ENCODE measurements at regions of chr12 and their contacts with region 1.

Region 1: GRCh38 chr12:47837190-47838171 is 17.8 kb upstream of the HDAC7 start:
- DNase-seq: peak; percentile 71 to 86 (median 72)
- ATAC-seq: peak; percentile 39
- H3K4me3 ChIP-seq: no peak overlapping the region
- H3K27ac ChIP-seq: no peak overlapping the region
- H3K4me1 ChIP-seq: peaks cover 34 to 56% of the 10 kb centered on the region in 2 experiments
- H3K27me3 ChIP-seq: no peaks in the 10 kb centered on the region; a peak in 1 of 5 replicates
- CTCF ChIP-seq: peak; percentile 86 to 95 (median 92)
- EP300 ChIP-seq: no peak
- POLR2A ChIP-seq: no peak
- RAD21 ChIP-seq: peak; percentile 89 to 96

Region 2: GRCh38 chr12:47651368-47652254 is 185.9 kb before region 1 on chr12:
- CTCF ChIA-PET with region 1: no interaction called
- POLR2A ChIA-PET with region 1: no interaction called
- in situ Hi-C with region 1: no loop called
- intact Hi-C with region 1: loop called (anchors 5 kb)
- DNase-seq: peak in 2 of 4 experiments; percentile 23 to 52
- ATAC-seq: peak; percentile 80
- H3K4me3 ChIP-seq: no peak overlapping the region
- H3K27ac ChIP-seq: no peak overlapping the region
- H3K4me1 ChIP-seq: peaks cover 0 to 9% of the 10 kb centered on the region in 2 experiments; a peak in 1 of 5 replicates
- H3K27me3 ChIP-seq: no peaks in the 10 kb centered on the region
- CTCF ChIP-seq: peak; percentile 57 to 65 (median 59); a peak in 5 of 6 replicates
- EP300 ChIP-seq: no peak
- POLR2A ChIP-seq: no peak
- RAD21 ChIP-seq: peak; percentile 21 to 58; a peak in 3 of 4 replicates

Region 3: DNA sequence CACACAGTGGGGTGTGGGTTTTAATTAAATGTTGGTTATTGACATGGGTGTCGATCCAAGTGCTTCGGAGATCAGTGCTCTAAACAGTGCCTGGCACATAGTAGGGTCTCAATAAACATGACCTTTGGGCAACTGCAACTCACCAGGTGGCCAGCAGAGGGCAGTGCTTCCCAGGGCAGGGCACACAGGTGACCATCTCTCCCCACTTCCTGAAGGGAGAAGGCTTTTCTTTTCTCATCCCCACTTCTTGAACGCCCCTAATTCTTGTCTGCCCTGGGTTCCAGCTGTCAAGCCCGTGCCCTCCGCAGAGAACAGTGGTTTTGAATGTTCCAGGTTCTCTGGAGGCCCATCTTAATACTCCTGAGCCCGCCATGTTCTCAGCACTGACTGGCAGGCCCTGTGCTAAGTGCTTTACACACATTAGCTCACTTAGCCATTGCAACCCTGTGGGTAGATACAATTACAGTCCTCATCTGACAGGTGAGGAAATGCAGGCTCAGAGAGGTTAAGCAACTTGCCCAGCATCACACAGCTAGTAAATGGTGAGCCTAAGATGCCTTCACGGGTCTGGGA is 95.1 kb before region 1 on chr12:
- CTCF ChIA-PET with region 1: interaction called, 59 read pairs
- POLR2A ChIA-PET with region 1: interaction called, 5 read pairs
- in situ Hi-C with region 1: no loop called
- intact Hi-C with region 1: loop called (anchors 1 kb)
- DNase-seq: peak; percentile 71 to 76 (median 74)
- ATAC-seq: peak; percentile 57
- H3K4me3 ChIP-seq: no peak overlapping the region
- H3K27ac ChIP-seq: no peak overlapping the region
- H3K4me1 ChIP-seq: peaks cover 27 to 54% of the 10 kb centered on the region in 2 experiments
- H3K27me3 ChIP-seq: peaks cover 7 to 41% of the 10 kb centered on the region in 2 experiments
- CTCF ChIP-seq: peak; percentile 93 to 98 (median 97)
- EP300 ChIP-seq: no peak
- POLR2A ChIP-seq: no peak
- RAD21 ChIP-seq: peak; percentile 91 to 97

Region 4: GRCh38 chr12:47785036-47785886 is 52.2 kb before region 1 on chr12:
- CTCF ChIA-PET with region 1: no interaction called
- POLR2A ChIA-PET with region 1: interaction called, 5 read pairs
- in situ Hi-C with region 1: loop called (anchors 5 kb)
- intact Hi-C with region 1: no loop called
- DNase-seq: peak; percentile 45 to 75 (median 64)
- ATAC-seq: peak; percentile 20; the same call in 2 of the 3 replicates
- H3K4me3 ChIP-seq: no peak overlapping the region
- H3K27ac ChIP-seq: no peak overlapping the region; the same call in 2 of the 3 replicates
- H3K4me1 ChIP-seq: peaks cover 0 to 35% of the 10 kb centered on the region in 2 experiments; a peak in 4 of 5 replicates
- H3K27me3 ChIP-seq: no peaks in the 10 kb centered on the region
- CTCF ChIP-seq: no peak
- EP300 ChIP-seq: no peak
- POLR2A ChIP-seq: no peak
- RAD21 ChIP-seq: no peak

Region 5: DNA sequence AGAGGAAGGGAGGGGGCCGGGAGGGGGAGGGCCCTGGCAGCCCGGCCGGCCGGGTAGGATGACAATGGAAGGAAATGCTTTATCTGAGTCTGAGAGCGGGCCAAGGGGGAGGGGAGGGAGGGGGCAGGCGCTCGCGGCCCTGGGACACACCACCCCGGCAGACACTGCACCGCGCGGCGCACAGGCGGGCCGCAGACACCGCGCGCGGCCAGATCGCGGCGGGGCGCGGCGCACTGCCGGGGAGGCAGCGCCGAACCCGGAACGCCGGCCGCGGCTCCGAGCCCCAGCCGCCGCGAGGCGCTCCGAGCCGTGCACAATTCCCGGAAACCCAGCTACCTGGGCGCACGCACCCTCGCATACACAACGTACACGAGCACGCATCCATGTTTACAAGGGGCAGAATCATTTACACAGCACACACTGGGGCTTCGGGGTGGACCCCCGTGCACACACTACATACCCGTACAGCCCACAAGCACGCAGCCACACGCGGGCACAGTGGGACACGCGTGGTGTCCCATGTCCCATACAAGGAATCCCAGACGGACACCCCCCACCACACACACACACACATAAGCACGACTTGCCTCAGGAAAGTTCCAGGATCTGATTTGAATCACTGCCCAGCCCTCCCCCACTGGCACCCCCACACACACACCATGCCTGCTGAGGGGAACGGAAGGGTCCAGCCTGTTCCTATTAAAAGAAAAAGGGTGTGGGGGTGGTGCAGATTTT is 17.4 kb before region 1 on chr12 and contains the start of gene HDAC7:
- CTCF ChIA-PET with region 1: interaction called, 17 read pairs
- POLR2A ChIA-PET with region 1: interaction called, 6 read pairs
- in situ Hi-C with region 1: no loop called
- intact Hi-C with region 1: loop called (anchors 1 kb)
- DNase-seq: peak; percentile 89 to 95 (median 92)
- ATAC-seq: peak; percentile 82
- H3K4me3 ChIP-seq: peak within 1 kb of the TSS; percentile 68
- H3K27ac ChIP-seq: peak within 1 kb of the TSS; percentile 80
- H3K4me1 ChIP-seq: peaks cover 39 to 51% of the 10 kb centered on the region in 2 experiments
- H3K27me3 ChIP-seq: no peaks in the 10 kb centered on the region
- CTCF ChIP-seq: peak in 1 of 3 experiments; percentile 20; a peak in 1 of 6 replicates
- EP300 ChIP-seq: no peak
- POLR2A ChIP-seq: no peak
- RAD21 ChIP-seq: 0 out of 4 replicates have a peak, but pooled peaks of 1 of the 2 experiments have one; percentile 16
- polyA plus RNA-seq, gene HDAC7: 2.5 to 3.8 TPM

Region 6: DNA sequence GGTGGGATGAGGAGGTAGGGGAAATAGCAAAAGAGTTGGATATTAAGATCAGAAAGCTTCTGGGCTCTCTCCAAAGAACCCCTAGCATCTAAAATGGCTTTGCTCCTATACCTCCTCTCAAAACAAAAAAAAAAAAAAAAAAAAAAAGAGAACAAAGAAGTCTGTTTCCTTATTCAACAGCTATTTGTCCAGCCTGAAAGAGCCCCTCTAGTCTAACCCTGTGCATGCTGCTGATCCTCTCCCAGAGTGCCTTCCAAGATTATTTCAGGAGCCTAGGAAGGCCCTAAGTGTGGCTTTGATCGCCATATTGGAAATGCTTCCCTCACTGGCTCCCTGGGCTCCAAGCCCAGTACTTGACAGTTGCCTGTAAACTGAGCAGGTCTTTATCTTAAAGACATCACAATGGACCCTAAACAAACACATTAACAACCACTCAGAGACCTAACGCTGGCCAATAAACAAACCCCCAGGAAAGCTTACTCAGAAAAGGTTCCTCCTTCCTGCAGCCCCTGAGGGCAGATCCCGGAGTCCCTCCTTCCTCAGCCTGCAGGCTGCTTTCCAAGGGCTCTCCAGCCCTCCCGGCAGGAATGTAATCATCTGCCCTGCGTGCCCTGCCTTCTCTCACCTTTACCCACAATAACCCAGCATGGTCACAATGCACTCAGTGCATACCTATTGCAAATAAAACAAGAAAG is 184.2 kb after region 1 on chr12:
- CTCF ChIA-PET with region 1: no interaction called
- POLR2A ChIA-PET with region 1: no interaction called
- in situ Hi-C with region 1: no loop called
- intact Hi-C with region 1: no loop called
- DNase-seq: no peak
- ATAC-seq: no peak
- H3K4me3 ChIP-seq: no peak overlapping the region
- H3K27ac ChIP-seq: no peak overlapping the region
- H3K4me1 ChIP-seq: no peaks in the 10 kb centered on the region
- H3K27me3 ChIP-seq: peaks cover 32 to 37% of the 10 kb centered on the region in 2 experiments
- CTCF ChIP-seq: no peak
- EP300 ChIP-seq: no peak
- POLR2A ChIP-seq: no peak
- RAD21 ChIP-seq: no peak

Region 7: DNA sequence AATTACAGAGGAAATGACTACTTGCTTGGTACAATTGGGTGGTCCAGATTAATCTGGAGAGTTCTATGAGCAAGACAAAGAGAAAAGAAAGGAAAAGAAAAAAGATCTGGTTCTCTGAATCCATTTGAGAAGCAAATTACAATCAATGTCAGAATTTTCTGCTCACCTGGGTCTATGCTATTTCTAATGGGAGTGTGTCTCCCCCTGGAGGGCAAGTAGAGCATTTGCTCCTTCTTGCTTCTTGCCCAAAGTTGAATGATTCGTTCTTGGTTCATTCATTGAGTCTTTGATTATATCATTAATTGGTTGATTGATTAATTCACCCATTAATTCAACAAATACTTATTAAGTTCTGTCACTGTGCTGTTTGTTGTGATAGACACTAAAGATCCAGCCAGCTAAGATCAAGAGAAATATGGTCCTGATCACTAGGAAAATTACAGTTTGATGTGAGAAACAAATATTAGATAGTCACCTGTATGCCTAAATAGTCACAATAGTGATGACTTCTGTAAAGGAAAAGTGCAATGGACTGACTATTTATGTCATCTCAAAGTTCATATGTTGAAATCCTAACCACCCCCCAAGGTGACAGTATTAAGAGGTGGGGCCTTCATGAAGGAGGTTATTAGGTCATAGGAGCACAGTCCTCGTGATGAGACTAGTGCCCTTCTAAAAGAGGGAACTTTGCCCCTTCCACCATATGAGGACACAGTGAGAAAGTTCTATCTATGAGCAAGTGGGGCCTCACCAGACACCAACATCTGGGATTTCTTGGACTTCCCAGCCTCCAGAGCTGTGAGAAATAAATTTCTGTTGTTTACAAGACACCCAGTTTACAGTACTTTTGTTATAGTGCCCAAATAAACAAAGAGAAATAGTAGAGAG is 327.9 kb after region 1 on chr12:
- CTCF ChIA-PET with region 1: no interaction called
- POLR2A ChIA-PET with region 1: no interaction called
- in situ Hi-C with region 1: no loop called
- intact Hi-C with region 1: loop called (anchors 2 kb)
- DNase-seq: peak; percentile 58 to 77 (median 61)
- ATAC-seq: peak; percentile 82
- H3K4me3 ChIP-seq: no peak overlapping the region
- H3K27ac ChIP-seq: no peak overlapping the region
- H3K4me1 ChIP-seq: no peaks in the 10 kb centered on the region; a peak in 2 of 5 replicates
- H3K27me3 ChIP-seq: no peaks in the 10 kb centered on the region
- CTCF ChIP-seq: peak; percentile 72 to 92 (median 85)
- EP300 ChIP-seq: no peak
- POLR2A ChIP-seq: no peak
- RAD21 ChIP-seq: peak; percentile 89 to 94

Measured in K562 (cell line).